Sigmoid colon (tissue), 7 donors: ENCODE measurements at regions of chr3 and their contacts with region 1.

Region 1: DNA sequence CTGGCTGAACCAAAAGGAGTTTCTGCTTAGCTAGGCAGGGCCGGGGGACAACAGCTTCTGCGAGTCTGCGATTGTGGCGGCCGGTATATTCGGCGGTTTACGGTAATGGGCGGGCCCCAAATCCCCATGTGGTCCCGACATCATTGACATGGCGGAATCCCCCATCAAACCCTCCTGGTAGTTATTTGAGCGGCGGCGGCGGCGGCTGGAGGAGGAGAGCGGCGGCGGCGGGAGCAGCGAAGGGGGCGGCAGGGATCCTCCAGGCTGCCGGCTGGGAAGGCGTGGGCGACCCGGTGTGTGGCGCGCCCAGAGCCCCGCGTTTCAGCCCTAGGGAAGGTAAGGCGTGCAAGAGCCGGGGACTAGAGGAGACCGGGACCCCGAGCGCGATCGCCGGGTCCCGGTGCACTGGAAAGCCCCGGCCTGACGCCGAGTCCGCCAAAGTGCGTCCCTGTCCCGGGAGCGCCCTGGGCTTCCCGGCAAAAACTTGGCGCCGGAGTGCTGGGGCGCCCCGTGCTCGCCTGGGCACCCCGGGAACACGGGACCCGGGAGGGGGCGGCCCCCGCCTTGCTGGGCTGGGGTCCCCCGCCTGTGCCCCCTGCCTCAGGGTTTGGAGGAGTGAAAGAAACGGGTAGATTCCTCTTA is at the start of gene FNDC3B:
- DNase-seq: peak; percentile 97
- H3K4me3 ChIP-seq: peak within 1 kb of the TSS; percentile 60 to 97 (median 94)
- H3K27ac ChIP-seq: peak within 1 kb of the TSS; percentile 87 to 100 (median 98)
- H3K4me1 ChIP-seq: peaks cover 0 to 40% (median 26%) of the 10 kb centered on the region in 4 donors
- H3K27me3 ChIP-seq: no peaks in the 10 kb centered on the region
- CTCF ChIP-seq: no peak
- EP300 ChIP-seq: peak in 1 of 4 donors; percentile 59
- POLR2A ChIP-seq: peak; percentile 83 to 86
- total RNA-seq, gene FNDC3B: 50.3 to 93.9 (median 63.0) TPM

Region 2: DNA sequence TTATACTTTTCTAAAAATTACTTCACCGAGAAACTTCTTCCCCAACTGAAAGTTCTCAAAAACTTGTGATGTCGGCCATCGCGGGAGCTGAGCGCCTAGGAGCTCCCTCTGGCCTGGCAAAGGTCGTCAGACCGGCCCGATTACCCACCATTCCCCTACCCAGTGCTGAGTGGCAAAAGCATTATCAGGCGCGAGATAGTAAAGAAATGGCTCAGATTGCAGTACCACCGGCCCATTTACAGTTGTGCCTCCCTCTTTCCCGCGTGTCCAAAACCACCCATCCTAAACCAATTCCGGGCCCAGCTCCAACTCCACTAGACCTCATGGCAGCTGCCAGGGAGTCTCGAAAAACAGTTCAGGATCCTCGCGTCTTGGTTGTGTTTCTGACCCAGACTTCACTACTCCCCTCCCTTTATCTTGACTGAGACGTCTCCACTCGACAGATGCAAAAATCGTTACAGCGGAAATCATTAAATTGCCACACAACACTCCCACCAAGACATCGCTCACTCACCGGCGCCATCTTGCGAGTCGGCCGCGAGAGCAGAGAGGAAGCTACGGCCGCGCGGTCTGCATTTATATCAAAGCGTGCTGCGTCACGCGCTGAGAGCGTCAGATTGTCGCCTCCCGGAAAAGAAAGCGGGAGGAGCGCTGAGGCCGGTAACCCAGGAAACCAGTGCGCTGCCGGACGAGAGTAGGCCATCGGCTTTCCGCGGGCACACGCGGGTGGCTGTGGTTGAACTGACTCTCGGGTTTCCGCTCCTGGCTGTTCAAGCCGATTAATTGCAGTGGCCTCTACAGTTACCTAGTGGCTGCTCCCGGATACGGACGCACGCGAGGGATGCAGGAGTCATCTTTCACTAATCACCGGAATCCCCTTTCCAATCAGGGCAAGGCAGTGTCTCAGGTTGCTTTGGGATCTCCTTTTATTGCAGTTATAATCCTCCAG is 1169.6 kb before region 1 on chr3 and contains the start of gene RPL22L1:
- intact Hi-C with region 1: loop called (anchors 5 kb)
- DNase-seq: peak; percentile 97
- H3K4me3 ChIP-seq: peak within 1 kb of the TSS; percentile 65 to 72 (median 67)
- H3K27ac ChIP-seq: peak within 1 kb of the TSS; percentile 79 to 85 (median 84)
- H3K4me1 ChIP-seq: peaks cover 0 to 29% (median 20%) of the 10 kb centered on the region in 4 donors
- H3K27me3 ChIP-seq: no peaks in the 10 kb centered on the region
- CTCF ChIP-seq: no peak
- EP300 ChIP-seq: peak in 2 of 4 donors; percentile 12 to 21
- POLR2A ChIP-seq: peak; percentile 74 to 78
- total RNA-seq, gene RPL22L1: 69.6 to 113 (median 93.0) TPM

Region 3: GRCh38 chr3:172106989-172107388 is 67.4 kb after region 1 on chr3:
- intact Hi-C with region 1: no loop called
- DNase-seq: no peak
- H3K4me3 ChIP-seq: no peak overlapping the region
- H3K27ac ChIP-seq: peak overlapping the region in 3 of 4 donors; percentile 15 to 67 (median 63)
- H3K4me1 ChIP-seq: peaks cover 0 to 82% (median 71%) of the 10 kb centered on the region in 4 donors
- H3K27me3 ChIP-seq: no peaks in the 10 kb centered on the region
- CTCF ChIP-seq: no peak
- EP300 ChIP-seq: no peak
- POLR2A ChIP-seq: no peak

Region 4: GRCh38 chr3:172142051-172142863 is 102.7 kb after region 1 on chr3:
- intact Hi-C with region 1: loop called (anchors 5 kb)
- DNase-seq: no peak
- H3K4me3 ChIP-seq: no peak overlapping the region
- H3K27ac ChIP-seq: peak overlapping the region; percentile 16 to 76 (median 46)
- H3K4me1 ChIP-seq: peaks cover 0 to 78% (median 59%) of the 10 kb centered on the region in 4 donors
- H3K27me3 ChIP-seq: no peaks in the 10 kb centered on the region
- CTCF ChIP-seq: no peak
- EP300 ChIP-seq: no peak
- POLR2A ChIP-seq: no peak

Region 5: DNA sequence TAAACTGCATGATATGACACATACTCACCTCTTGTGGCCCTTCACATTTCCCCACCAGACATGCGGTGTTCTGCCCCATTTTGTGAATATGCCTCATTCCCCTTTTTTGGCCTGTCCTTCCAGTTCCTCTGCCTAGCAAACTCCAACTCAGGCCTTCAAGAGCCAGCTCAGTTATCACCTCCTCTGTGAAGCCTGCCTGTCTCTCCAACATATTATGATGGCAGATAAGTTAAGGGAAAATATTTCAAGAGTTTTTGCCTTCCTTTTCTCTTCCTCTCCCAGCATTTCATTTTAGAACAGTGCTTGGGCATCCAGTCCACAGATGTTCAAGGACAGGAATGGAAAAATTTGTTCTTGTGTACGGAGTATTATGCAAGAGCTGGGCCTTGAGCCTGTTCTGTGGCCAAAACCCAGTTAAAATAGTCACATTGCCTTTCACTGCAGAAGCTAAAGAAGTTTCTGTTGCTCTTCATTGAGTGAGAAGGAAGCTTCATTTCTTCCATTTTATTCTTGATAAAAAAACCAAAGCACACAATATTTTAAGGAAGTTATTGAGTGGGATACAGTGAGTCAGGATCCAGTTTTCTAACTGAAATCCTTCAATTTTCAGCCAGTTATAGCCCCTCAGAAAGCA is 216.7 kb after region 1 on chr3:
- intact Hi-C with region 1: loop called (anchors 5 kb)
- DNase-seq: peak; percentile 87
- H3K4me3 ChIP-seq: no peak overlapping the region
- H3K27ac ChIP-seq: peak overlapping the region; percentile 61 to 87 (median 83)
- H3K4me1 ChIP-seq: peaks cover 0 to 60% (median 46%) of the 10 kb centered on the region in 4 donors
- H3K27me3 ChIP-seq: no peaks in the 10 kb centered on the region
- CTCF ChIP-seq: no peak
- EP300 ChIP-seq: peak in 1 of 4 donors; percentile 55
- POLR2A ChIP-seq: no peak

Region 6: DNA sequence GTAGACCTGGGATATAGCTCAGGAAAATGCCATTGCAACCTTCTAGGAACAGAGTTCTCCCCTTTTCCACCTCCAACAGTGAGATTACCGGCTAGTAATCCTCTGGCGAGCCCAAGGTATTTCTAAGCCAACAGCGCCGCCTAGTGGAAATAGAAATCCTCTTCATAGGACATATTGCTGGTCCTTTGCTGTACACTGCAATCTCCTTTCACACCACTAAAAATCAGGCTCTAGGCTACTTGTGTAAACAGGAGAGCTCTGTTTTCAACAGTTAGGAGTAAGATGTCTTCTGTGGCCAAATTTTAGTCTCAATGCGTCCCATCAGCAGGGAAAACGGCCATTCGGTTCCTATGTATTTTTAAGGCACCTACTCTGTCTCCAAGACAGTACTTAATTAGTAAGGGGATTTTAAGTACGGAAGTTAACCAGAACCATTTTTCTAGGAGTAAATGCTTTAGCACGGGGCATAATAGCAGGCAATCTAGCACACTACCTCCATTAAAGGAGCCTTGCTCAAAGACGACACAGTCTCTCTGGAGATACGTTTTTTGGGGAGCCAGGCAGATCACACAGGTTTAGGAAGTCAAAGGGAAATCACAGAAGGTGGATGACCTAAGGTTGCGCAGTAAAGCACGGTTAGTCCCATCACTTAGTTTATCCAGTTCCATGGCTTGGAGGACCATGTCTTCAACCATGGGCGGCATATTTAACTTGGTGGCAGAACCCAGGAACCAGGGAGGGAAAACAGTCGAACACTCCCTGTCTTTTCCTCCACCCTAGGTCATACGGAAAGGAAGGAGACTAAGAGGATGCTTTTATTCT is 627.5 kb after region 1 on chr3:
- intact Hi-C with region 1: loop called (anchors 5 kb)
- DNase-seq: peak; percentile 85
- H3K4me3 ChIP-seq: no peak overlapping the region
- H3K27ac ChIP-seq: no peak overlapping the region
- H3K4me1 ChIP-seq: peaks cover 0 to 4% (median 0%) of the 10 kb centered on the region in 4 donors
- H3K27me3 ChIP-seq: no peaks in the 10 kb centered on the region
- CTCF ChIP-seq: peak; percentile 64 to 92 (median 82)
- EP300 ChIP-seq: no peak
- POLR2A ChIP-seq: no peak